Transverse colon (tissue), 4 donors: ENCODE measurements at regions of chr15 and their contacts with region 1.

Region 1: DNA sequence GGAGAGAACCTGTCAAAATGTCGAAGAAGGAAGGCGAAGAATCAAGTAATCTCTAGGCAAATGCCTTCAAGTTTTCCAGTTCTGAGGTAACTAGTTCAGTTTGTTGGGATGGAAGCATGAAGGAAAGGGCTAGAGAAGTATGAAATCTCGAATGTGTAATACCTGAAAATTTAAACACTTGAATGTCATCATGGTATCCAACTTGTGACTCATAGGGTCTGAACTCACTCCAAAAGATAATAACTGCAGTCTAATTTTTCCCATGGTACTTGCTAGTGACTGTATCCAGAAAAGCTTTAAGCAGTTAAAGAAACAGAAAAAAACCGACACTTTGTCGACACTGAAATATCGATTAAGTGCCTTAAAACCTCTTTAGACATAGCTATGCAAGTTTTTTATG is 102.9 kb upstream of the CHRM5 start:
- DNase-seq: no peak
- H3K4me3 ChIP-seq: no peak overlapping the region
- H3K27ac ChIP-seq: no peak overlapping the region
- H3K4me1 ChIP-seq: no peaks in the 10 kb centered on the region
- H3K27me3 ChIP-seq: no peaks in the 10 kb centered on the region
- CTCF ChIP-seq: no peak
- EP300 ChIP-seq: no peak
- POLR2A ChIP-seq: no peak

Region 2: GRCh38 chr15:33788906-33789540 is 76.4 kb before region 1 on chr15:
- in situ Hi-C with region 1: no loop called
- intact Hi-C with region 1: no loop called
- DNase-seq: no peak
- H3K4me3 ChIP-seq: no peak overlapping the region
- H3K27ac ChIP-seq: no peak overlapping the region
- H3K4me1 ChIP-seq: no peaks in the 10 kb centered on the region
- H3K27me3 ChIP-seq: no peaks in the 10 kb centered on the region
- CTCF ChIP-seq: no peak
- EP300 ChIP-seq: no peak
- POLR2A ChIP-seq: no peak

Region 3: DNA sequence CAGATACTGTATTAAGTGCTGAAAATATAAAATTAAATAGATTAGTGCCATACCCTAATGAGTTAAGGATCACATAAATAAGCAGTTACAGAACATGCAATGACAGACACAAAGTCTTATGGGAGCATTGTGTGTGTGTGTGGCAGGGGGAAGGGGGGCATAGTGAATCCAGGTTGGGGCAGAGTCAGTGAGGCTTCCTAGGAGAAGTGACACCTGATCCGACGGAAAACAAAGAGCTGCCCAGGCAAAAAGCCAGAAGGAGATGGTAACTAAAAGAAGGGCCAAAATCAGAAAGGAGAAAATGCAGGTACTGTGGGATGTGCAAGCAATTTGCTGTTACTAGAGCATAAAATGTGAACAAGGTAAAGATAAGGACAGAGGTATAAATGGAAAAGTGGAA is 22.8 kb after region 1 on chr15:
- in situ Hi-C with region 1: no loop called
- intact Hi-C with region 1: loop called (anchors 2 kb)
- DNase-seq: no peak
- H3K4me3 ChIP-seq: no peak overlapping the region
- H3K27ac ChIP-seq: no peak overlapping the region
- H3K4me1 ChIP-seq: no peaks in the 10 kb centered on the region
- H3K27me3 ChIP-seq: no peaks in the 10 kb centered on the region
- CTCF ChIP-seq: no peak
- EP300 ChIP-seq: no peak
- POLR2A ChIP-seq: no peak